GM12878 (cell line): ENCODE measurements at regions of chr1 and their contacts with region 1.

Region 1: GRCh38 chr1:183915625-183916510 is 110.9 kb downstream of the RGL1 start:
- DNase-seq: peak; percentile 68
- ATAC-seq: peak; percentile 60
- H3K4me3 ChIP-seq: no peak overlapping the region
- H3K27ac ChIP-seq: peak overlapping the region; percentile 62
- H3K4me1 ChIP-seq: peaks cover 33% of the 10 kb centered on the region
- H3K27me3 ChIP-seq: no peaks in the 10 kb centered on the region
- CTCF ChIP-seq: peak; percentile 66 to 91 (median 69)
- EP300 ChIP-seq: no peak
- POLR2A ChIP-seq: no peak
- RAD21 ChIP-seq: peak; percentile 98

Region 2: DNA sequence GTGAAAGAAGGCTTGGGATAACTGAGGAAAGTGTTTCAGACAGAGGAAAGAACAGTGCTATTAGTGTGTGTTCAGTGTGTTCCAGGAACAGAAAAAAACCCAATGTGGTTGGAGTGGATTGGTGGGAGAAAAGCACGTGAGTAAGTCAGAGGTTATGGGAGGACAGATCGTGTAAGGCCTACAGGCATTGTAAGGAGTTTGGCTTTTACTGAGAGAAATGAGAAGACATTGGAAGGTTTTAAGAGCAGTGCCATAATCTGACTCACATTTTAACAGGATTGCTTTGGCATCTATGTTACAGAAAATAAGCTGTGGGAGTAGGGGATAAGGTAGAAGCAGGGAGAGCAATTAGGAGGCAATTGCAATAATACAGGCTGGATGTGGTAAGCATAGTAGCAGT is 285.1 kb before region 1 on chr1:
- CTCF ChIA-PET with region 1: interaction called, 59 read pairs
- POLR2A ChIA-PET with region 1: interaction called, 9 read pairs
- RAD21 ChIA-PET with region 1: interaction called, 23 read pairs
- SMC1A ChIA-PET with region 1: interaction called, 43 read pairs
- in situ Hi-C with region 1: no loop called
- intact Hi-C with region 1: loop called (anchors 5 kb)
- DNase-seq: no peak
- ATAC-seq: peak; percentile 10
- H3K4me3 ChIP-seq: peak overlapping the region; percentile 39; the same call in 1 of the 2 replicates
- H3K27ac ChIP-seq: no peak overlapping the region
- H3K4me1 ChIP-seq: no peaks in the 10 kb centered on the region; the same call in 1 of the 2 replicates
- H3K27me3 ChIP-seq: no peaks in the 10 kb centered on the region
- CTCF ChIP-seq: no peak
- EP300 ChIP-seq: no peak
- POLR2A ChIP-seq: no peak
- RAD21 ChIP-seq: no peak

Region 3: DNA sequence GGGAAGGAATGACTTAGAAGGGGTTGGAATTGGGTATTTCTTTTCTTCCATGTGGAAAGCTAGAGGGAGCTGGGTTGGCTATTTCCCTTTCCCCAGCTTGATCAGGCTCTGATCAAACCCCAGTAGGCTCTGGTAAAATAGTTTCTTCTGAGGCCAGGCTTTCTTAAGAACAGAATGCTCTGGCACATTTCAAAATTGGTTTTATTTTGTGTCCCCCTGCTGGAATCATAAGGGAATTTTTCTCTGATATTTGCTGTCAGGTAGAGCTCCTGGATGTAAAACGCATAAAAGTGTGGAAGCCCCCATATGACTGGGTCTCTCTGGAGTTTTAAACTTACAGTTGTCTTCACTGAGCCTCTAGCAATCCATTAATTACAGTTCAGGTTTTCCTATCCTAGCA is 245.7 kb before region 1 on chr1:
- CTCF ChIA-PET with region 1: interaction called, 18 read pairs
- POLR2A ChIA-PET with region 1: no interaction called
- RAD21 ChIA-PET with region 1: interaction called, 5 read pairs
- SMC1A ChIA-PET with region 1: interaction called, 4 read pairs
- in situ Hi-C with region 1: no loop called
- intact Hi-C with region 1: no loop called
- DNase-seq: no peak
- ATAC-seq: no peak
- H3K4me3 ChIP-seq: no peak overlapping the region
- H3K27ac ChIP-seq: no peak overlapping the region
- H3K4me1 ChIP-seq: no peaks in the 10 kb centered on the region
- H3K27me3 ChIP-seq: no peaks in the 10 kb centered on the region
- CTCF ChIP-seq: no peak
- EP300 ChIP-seq: no peak
- POLR2A ChIP-seq: no peak
- RAD21 ChIP-seq: no peak

Region 4: GRCh38 chr1:183734543-183735036 is 181.3 kb before region 1 on chr1:
- CTCF ChIA-PET with region 1: interaction called, 14 read pairs
- POLR2A ChIA-PET with region 1: no interaction called
- RAD21 ChIA-PET with region 1: interaction called, 9 read pairs
- SMC1A ChIA-PET with region 1: interaction called, 8 read pairs
- in situ Hi-C with region 1: no loop called
- intact Hi-C with region 1: loop called (anchors 1 kb)
- DNase-seq: no peak
- ATAC-seq: no peak
- H3K4me3 ChIP-seq: no peak overlapping the region
- H3K27ac ChIP-seq: no peak overlapping the region
- H3K4me1 ChIP-seq: peaks cover 15% of the 10 kb centered on the region; the same call in 1 of the 2 replicates
- H3K27me3 ChIP-seq: no peaks in the 10 kb centered on the region
- CTCF ChIP-seq: no peak
- EP300 ChIP-seq: no peak
- POLR2A ChIP-seq: no peak
- RAD21 ChIP-seq: no peak

Region 5: DNA sequence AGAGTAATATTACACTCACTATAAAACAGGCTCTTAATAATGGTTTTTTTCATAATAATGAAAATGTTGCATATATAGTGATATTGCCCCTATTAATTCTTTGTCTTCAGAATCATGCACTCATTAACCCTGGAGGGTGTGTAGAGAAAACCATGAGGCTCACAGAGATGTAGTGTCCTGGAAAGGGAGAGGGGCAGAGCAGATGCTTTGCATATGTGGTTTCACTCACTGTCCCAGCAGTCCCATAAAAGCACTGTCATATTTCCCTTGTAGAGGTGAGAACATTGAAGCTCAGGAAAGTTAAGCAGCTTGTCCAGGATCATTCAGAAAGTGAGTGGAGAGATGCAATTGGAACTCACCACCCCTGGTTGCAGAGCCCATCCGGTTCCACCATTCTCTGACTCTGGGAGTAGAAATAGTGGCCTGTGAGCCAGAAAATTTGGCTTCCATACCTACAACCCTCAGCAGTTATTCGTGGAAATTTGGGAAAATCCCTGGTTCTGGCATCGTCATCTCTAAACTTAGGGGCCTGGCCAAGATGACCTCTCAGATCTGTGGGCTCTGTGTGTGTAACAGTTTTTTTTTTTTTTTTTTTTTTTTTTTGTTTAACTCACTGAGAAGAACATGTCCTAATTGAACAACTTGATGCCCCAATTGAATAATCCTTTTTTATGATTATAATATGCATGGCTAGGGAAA is 24.6 kb before region 1 on chr1:
- CTCF ChIA-PET with region 1: interaction called, 44 read pairs
- POLR2A ChIA-PET with region 1: interaction called, 3 read pairs
- RAD21 ChIA-PET with region 1: interaction called, 8 read pairs
- SMC1A ChIA-PET with region 1: interaction called, 134 read pairs
- in situ Hi-C with region 1: no loop called
- intact Hi-C with region 1: no loop called
- DNase-seq: no peak
- ATAC-seq: peak; percentile 79
- H3K4me3 ChIP-seq: no peak overlapping the region
- H3K27ac ChIP-seq: peak overlapping the region; percentile 56
- H3K4me1 ChIP-seq: peaks cover 71% of the 10 kb centered on the region
- H3K27me3 ChIP-seq: no peaks in the 10 kb centered on the region
- CTCF ChIP-seq: no peak
- EP300 ChIP-seq: no peak
- POLR2A ChIP-seq: no peak
- RAD21 ChIP-seq: no peak

Region 6: GRCh38 chr1:183956559-183957188 is 40.8 kb after region 1 on chr1:
- CTCF ChIA-PET with region 1: interaction called, 6 read pairs
- POLR2A ChIA-PET with region 1: no interaction called
- RAD21 ChIA-PET with region 1: interaction called, 4 read pairs
- SMC1A ChIA-PET with region 1: interaction called, 18 read pairs
- in situ Hi-C with region 1: no loop called
- intact Hi-C with region 1: loop called (anchors 1 kb)
- DNase-seq: peak; percentile 94
- ATAC-seq: peak; percentile 99
- H3K4me3 ChIP-seq: peak overlapping the region; percentile 5; the same call in 1 of the 2 replicates
- H3K27ac ChIP-seq: 0 out of 2 replicates have a peak overlapping the region, but pooled peaks have one; percentile 20
- H3K4me1 ChIP-seq: peaks cover 16% of the 10 kb centered on the region
- H3K27me3 ChIP-seq: no peaks in the 10 kb centered on the region
- CTCF ChIP-seq: peak; percentile 33 to 36 (median 35); a peak in 3 of 6 replicates
- EP300 ChIP-seq: peak; percentile 90 to 95
- POLR2A ChIP-seq: no peak
- RAD21 ChIP-seq: peak; percentile 61

Region 7: GRCh38 chr1:183980951-183981525 is 65.2 kb after region 1 on chr1:
- CTCF ChIA-PET with region 1: no interaction called
- POLR2A ChIA-PET with region 1: no interaction called
- RAD21 ChIA-PET with region 1: no interaction called
- SMC1A ChIA-PET with region 1: no interaction called
- in situ Hi-C with region 1: no loop called
- intact Hi-C with region 1: no loop called
- DNase-seq: no peak
- ATAC-seq: no peak
- H3K4me3 ChIP-seq: no peak overlapping the region
- H3K27ac ChIP-seq: no peak overlapping the region
- H3K4me1 ChIP-seq: no peaks in the 10 kb centered on the region
- H3K27me3 ChIP-seq: no peaks in the 10 kb centered on the region
- CTCF ChIP-seq: no peak
- EP300 ChIP-seq: no peak
- POLR2A ChIP-seq: no peak
- RAD21 ChIP-seq: no peak